A673 (cell line): ENCODE measurements at regions of chr1 and their contacts with region 1.

Region 1: GRCh38 chr1:224747578-224747977 is 131.5 kb downstream of the CNIH3 start:
- DNase-seq: peak; percentile 76
- H3K4me3 ChIP-seq: no peak overlapping the region
- H3K27ac ChIP-seq: no peak overlapping the region
- H3K4me1 ChIP-seq: peaks cover 3% of the 10 kb centered on the region
- H3K27me3 ChIP-seq: no peaks in the 10 kb centered on the region
- CTCF ChIP-seq: no peak

Region 2: DNA sequence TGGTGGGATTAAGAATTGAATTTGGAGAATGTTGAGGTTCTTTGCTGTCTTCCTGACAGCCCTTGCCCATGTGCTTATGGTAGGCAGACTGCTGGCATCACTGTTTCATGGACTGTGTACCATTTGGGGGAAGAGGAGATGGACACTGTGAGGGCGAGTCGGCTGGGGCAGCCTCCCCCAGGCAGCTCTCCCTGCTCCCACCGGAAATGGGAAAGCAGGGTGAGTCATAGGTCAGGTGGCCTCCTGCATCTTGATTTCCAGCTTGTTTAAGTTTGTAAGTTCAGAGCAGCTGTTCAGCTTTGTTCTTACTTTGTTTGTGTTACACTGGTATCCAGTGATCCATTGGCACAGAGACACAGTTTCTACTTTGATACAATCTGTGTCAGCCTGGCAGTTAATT is 218.7 kb before region 1 on chr1:
- CTCF ChIA-PET with region 1: no interaction called
- POLR2A ChIA-PET with region 1: no interaction called
- intact Hi-C with region 1: loop called (anchors 10 kb)
- DNase-seq: peak; percentile 39
- H3K4me3 ChIP-seq: no peak overlapping the region
- H3K27ac ChIP-seq: no peak overlapping the region
- H3K4me1 ChIP-seq: peaks cover 10% of the 10 kb centered on the region
- H3K27me3 ChIP-seq: no peaks in the 10 kb centered on the region
- CTCF ChIP-seq: no peak

Region 3: GRCh38 chr1:224720226-224720625 is 27.4 kb before region 1 on chr1:
- CTCF ChIA-PET with region 1: no interaction called
- POLR2A ChIA-PET with region 1: no interaction called
- intact Hi-C with region 1: loop called (anchors 2 kb)
- DNase-seq: no peak
- H3K4me3 ChIP-seq: no peak overlapping the region
- H3K27ac ChIP-seq: no peak overlapping the region
- H3K4me1 ChIP-seq: no peaks in the 10 kb centered on the region
- H3K27me3 ChIP-seq: no peaks in the 10 kb centered on the region
- CTCF ChIP-seq: no peak

Region 4: DNA sequence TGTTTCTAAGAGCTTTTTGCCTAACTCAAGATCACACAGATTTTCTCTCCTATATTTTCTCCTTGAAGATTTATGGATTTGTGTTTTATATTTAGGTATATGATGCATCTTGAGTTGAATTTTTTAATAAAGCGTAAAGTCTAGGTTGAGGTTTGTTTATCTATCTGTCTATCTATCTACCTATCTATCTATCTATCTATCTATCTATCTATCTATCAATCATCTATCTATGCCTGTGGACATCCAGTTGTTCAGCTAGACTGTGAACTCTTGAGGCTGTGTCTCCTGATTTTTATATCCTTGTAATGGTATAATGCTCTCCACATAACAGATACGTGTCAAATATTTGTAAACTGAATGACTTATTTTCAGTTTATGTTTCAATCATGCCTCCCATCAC is 302.0 kb after region 1 on chr1:
- CTCF ChIA-PET with region 1: no interaction called
- POLR2A ChIA-PET with region 1: no interaction called
- intact Hi-C with region 1: no loop called
- DNase-seq: no peak
- H3K4me3 ChIP-seq: no peak overlapping the region
- H3K27ac ChIP-seq: no peak overlapping the region
- H3K4me1 ChIP-seq: peaks cover 3% of the 10 kb centered on the region
- H3K27me3 ChIP-seq: peaks cover 20% of the 10 kb centered on the region
- CTCF ChIP-seq: no peak